HEK293 (cell line): ENCODE measurements at regions of chr7 and their contacts with region 1.

Region 1: GRCh38 chr7:141654551-141654950 is 47.4 kb downstream of the DENND11 start:
- H3K4me3 ChIP-seq: no peak overlapping the region
- H3K27ac ChIP-seq: no peak overlapping the region
- H3K4me1 ChIP-seq: no peaks in the 10 kb centered on the region
- CTCF ChIP-seq: peak; percentile 69

Region 2: DNA sequence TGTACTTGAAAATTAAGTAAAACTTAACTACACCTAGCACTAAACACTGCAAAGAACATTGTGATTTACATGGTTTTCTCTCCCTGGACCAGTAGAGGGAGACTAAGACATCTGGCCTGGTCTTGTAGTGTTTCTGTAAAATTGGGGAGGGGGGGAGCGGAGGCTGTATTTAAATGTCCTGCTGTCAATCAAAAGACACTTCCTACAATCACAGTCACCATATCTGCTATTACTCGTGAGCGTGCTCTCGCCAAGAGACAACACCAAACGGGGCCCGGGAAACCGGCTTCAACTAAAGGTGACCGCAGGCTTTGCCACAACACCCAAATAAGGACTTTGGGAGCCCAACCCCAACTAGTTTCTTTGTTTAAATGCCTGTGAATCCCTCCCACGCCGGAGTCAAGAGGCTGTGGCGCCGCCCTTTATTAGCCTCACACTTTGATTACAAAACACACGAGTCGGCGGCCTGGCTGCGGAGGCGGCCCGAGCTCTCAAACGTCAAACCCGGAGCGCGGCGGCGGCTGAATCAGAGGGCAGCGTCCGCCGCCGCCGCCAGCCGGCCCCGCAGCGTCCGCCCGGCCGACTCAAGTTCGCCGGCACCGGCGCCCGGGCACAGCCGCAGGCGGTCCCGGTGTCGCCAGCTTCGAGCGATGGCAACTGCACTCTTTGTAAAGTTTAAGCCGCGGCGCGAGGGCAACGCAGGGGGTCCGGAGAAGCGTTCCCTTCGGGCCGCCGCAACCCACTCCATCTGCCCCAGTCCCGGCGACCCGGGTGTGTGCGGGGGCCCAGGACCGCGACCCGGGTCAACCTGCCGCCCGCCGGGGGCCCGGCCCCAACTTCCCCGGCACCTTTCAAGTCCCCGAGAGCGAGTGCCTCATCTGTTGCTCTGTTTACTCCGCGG is 1479.1 kb before region 1 on chr7:
- CTCF ChIA-PET with region 1: no interaction called
- POLR2A ChIA-PET with region 1: no interaction called
- H3K4me3 ChIP-seq: peak overlapping the region; percentile 72
- H3K27ac ChIP-seq: peak overlapping the region; percentile 86
- H3K4me1 ChIP-seq: no peaks in the 10 kb centered on the region
- CTCF ChIP-seq: peak; percentile 58; the same call in 1 of the 2 replicates

Region 3: GRCh38 chr7:140767418-140767817 is 887.1 kb before region 1 on chr7:
- CTCF ChIA-PET with region 1: no interaction called
- POLR2A ChIA-PET with region 1: no interaction called
- H3K4me3 ChIP-seq: no peak overlapping the region
- H3K27ac ChIP-seq: no peak overlapping the region
- H3K4me1 ChIP-seq: no peaks in the 10 kb centered on the region
- CTCF ChIP-seq: no peak

Region 4: DNA sequence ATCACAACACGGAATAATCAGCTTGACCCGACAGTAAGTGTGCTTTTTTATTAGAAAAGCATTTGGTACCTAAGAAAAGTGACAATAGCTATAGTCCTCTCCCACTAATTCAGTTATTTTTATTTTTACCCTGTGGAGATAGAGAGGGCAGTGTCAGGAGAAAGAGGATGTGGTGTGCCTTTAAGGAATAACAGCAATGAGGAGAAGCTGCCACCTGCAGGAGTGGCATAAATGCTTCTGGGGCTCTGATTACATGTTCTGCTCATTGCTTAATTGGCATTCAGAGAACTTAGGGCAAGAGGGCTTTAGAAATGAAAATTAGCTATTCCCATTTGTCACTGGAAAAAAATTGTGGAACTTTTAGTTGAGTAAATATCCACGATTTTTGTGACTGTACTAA is 12.7 kb before region 1 on chr7:
- CTCF ChIA-PET with region 1: interaction called, 17 read pairs
- POLR2A ChIA-PET with region 1: no interaction called
- H3K4me3 ChIP-seq: no peak overlapping the region
- H3K27ac ChIP-seq: no peak overlapping the region
- H3K4me1 ChIP-seq: no peaks in the 10 kb centered on the region
- CTCF ChIP-seq: no peak